Heart right ventricle (tissue), 16 donors: ENCODE measurements at regions of chr3 and their contacts with region 1.

Region 1: DNA sequence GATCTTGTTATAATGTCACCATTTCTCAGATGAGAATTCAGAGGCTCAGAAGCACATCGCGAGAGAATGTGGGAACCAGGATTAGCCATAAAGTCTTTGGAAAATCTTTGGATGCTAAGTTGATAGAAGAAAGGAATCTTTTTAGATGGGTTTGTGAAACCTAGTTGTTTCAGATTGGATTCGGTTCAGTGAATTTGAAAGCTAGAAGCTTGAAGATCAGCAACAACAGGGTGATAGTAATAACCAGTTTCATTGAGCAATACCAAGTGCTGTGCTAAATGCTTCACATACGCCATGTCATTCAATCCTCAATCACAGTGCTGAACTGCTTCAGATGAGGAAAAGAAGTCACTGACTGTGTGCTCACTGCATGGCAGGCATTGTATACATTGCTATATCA is 47.4 kb upstream of the MITF start:
- DNase-seq: no peak
- ATAC-seq: no peak
- H3K4me3 ChIP-seq: no peak overlapping the region
- H3K27ac ChIP-seq: no peak overlapping the region
- H3K4me1 ChIP-seq: peaks cover 0 to 10% (median 3%) of the 10 kb centered on the region in 9 donors
- H3K27me3 ChIP-seq: peaks cover 0 to 3% (median 0%) of the 10 kb centered on the region in 7 donors
- CTCF ChIP-seq: no peak

Region 2: GRCh38 chr3:69739204-69740102 is 47.6 kb after region 1 on chr3 and contains the start of gene MITF:
- intact Hi-C with region 1: loop called in 2 of 10 experiments (anchors 5 kb)
- DNase-seq: peak; percentile 92 to 94
- ATAC-seq: peak; percentile 96 to 99 (median 98)
- H3K4me3 ChIP-seq: peak within 1 kb of the TSS; percentile 76 to 98 (median 92)
- H3K27ac ChIP-seq: peak within 1 kb of the TSS; percentile 84 to 96 (median 92)
- H3K4me1 ChIP-seq: peaks cover 0 to 55% (median 14%) of the 10 kb centered on the region in 9 donors
- H3K27me3 ChIP-seq: peaks cover 0 to 6% (median 0%) of the 10 kb centered on the region in 7 donors
- CTCF ChIP-seq: no peak
- total RNA-seq, gene MITF: 53.7 to 101 (median 87.0) TPM

Region 3: DNA sequence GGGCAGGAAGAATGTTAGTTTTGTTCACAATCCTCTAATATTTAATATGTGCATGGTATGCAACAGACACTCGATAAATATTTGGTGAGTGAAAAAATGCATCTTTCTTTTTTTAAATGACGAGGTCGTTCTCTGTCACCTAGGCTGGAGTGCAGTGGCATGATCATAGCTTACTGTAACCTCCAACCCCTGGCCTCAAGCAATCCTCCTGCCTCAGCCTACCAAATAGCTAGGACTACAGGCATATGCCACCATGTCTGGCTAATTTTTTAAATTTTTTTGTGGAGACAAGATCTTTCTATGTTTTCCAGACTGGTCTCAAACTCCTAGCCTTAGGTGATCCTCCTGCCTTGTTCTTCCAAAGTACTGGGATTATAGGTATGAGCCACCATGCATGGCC is 113.7 kb after region 1 on chr3:
- intact Hi-C with region 1: no loop called
- DNase-seq: no peak
- ATAC-seq: no peak
- H3K4me3 ChIP-seq: no peak overlapping the region
- H3K27ac ChIP-seq: no peak overlapping the region
- H3K4me1 ChIP-seq: peaks cover 0 to 27% (median 5%) of the 10 kb centered on the region in 9 donors
- H3K27me3 ChIP-seq: no peaks in the 10 kb centered on the region
- CTCF ChIP-seq: no peak

Region 4: GRCh38 chr3:69855436-69856162 is 163.7 kb after region 1 on chr3:
- intact Hi-C with region 1: loop called (anchors 2 to 10 kb)
- DNase-seq: no peak
- ATAC-seq: peak in 7 of 8 donors; percentile 44 to 78 (median 54)
- H3K4me3 ChIP-seq: no peak overlapping the region
- H3K27ac ChIP-seq: peak overlapping the region in 6 of 10 donors; percentile 2 to 61 (median 53)
- H3K4me1 ChIP-seq: peaks cover 0 to 56% (median 28%) of the 10 kb centered on the region in 9 donors
- H3K27me3 ChIP-seq: no peaks in the 10 kb centered on the region
- CTCF ChIP-seq: peak in 7 of 9 donors; percentile 43 to 71 (median 56)

Region 5: GRCh38 chr3:69948246-69948862 is 256.5 kb after region 1 on chr3:
- intact Hi-C with region 1: loop called (anchors 2 to 10 kb)
- DNase-seq: no peak
- ATAC-seq: peak in 1 of 8 donors; percentile 17
- H3K4me3 ChIP-seq: no peak overlapping the region
- H3K27ac ChIP-seq: no peak overlapping the region
- H3K4me1 ChIP-seq: peaks cover 0 to 15% (median 0%) of the 10 kb centered on the region in 9 donors
- H3K27me3 ChIP-seq: no peaks in the 10 kb centered on the region
- CTCF ChIP-seq: peak; percentile 38 to 77 (median 66)